PC-3 (cell line): ENCODE measurements at regions of chr3 and their contacts with region 1.

Region 1: DNA sequence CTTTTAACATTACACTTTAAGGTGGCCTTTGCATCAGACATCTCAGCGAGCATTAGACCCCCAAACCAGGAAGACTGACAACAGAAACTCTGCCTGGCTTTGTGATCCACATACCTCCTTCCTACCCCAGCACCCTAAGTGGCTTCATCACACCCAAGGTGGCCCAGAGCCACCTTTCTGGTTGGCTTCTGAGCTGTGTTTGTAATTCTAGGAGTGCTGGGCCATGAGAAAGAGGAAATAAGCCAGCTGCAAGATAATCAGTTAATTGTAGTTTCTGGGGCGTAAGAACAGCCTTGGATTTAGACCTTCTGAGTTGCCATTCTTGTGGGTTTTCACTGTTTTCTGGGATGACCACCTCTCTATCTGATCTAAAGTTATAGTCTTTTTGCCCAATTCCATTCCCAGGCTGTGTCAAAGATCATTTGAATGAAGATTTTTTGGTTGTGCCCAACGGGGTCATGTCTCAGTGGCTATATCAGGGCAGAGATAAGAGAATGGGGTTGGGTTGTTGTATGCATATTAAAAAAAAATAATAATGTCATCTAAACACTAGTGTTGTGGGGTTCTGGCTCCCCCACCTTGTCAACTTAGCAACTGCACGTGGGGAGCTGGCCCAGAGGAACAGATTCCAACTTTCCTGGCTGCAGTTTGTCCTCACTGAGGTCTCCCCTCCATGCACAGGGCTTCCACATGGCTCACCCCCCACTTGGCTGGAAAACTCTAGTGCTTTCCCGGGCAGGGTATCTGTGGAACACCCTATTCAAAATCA is 234.8 kb upstream of the WNT5A start:
- DNase-seq: peak; percentile 56
- ATAC-seq: peak; percentile 64
- H3K4me3 ChIP-seq: no peak overlapping the region
- H3K27ac ChIP-seq: no peak overlapping the region
- H3K4me1 ChIP-seq: no peaks in the 10 kb centered on the region
- H3K27me3 ChIP-seq: no peaks in the 10 kb centered on the region
- CTCF ChIP-seq: peak; percentile 64

Region 2: DNA sequence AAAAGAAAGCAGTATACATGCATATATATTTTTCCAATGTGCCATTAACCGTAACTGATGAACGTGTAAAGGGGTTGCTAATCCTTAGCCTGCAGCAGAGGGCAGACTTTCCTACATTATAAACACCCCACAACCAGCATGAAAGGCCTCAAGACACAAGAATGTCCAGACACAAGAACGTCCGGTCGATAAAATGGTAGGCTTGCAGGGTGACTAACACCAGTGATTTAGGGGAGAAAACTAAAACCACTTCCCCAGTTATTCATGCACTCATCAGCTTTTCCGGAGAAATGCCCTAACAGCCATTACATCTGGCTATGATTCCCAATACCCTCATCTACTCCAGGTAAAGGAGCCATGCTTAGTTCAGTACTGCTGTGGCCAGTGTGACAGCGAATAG is 851.5 kb before region 1 on chr3:
- CTCF ChIA-PET with region 1: no interaction called
- POLR2A ChIA-PET with region 1: no interaction called
- intact Hi-C with region 1: loop called (anchors 1 kb)
- DNase-seq: peak; percentile 85
- ATAC-seq: peak; percentile 94
- H3K4me3 ChIP-seq: no peak overlapping the region
- H3K27ac ChIP-seq: peak overlapping the region; percentile 38; the same call in 1 of the 2 replicates
- H3K4me1 ChIP-seq: peaks cover 21% of the 10 kb centered on the region
- H3K27me3 ChIP-seq: no peaks in the 10 kb centered on the region
- CTCF ChIP-seq: peak; percentile 85

Region 3: GRCh38 chr3:55434789-55435188 is 287.1 kb before region 1 on chr3:
- CTCF ChIA-PET with region 1: no interaction called
- POLR2A ChIA-PET with region 1: no interaction called
- intact Hi-C with region 1: loop called (anchors 1 kb)
- DNase-seq: peak; percentile 73
- ATAC-seq: peak; percentile 74
- H3K4me3 ChIP-seq: no peak overlapping the region
- H3K27ac ChIP-seq: no peak overlapping the region
- H3K4me1 ChIP-seq: no peaks in the 10 kb centered on the region
- H3K27me3 ChIP-seq: no peaks in the 10 kb centered on the region
- CTCF ChIP-seq: peak; percentile 83

Region 4: DNA sequence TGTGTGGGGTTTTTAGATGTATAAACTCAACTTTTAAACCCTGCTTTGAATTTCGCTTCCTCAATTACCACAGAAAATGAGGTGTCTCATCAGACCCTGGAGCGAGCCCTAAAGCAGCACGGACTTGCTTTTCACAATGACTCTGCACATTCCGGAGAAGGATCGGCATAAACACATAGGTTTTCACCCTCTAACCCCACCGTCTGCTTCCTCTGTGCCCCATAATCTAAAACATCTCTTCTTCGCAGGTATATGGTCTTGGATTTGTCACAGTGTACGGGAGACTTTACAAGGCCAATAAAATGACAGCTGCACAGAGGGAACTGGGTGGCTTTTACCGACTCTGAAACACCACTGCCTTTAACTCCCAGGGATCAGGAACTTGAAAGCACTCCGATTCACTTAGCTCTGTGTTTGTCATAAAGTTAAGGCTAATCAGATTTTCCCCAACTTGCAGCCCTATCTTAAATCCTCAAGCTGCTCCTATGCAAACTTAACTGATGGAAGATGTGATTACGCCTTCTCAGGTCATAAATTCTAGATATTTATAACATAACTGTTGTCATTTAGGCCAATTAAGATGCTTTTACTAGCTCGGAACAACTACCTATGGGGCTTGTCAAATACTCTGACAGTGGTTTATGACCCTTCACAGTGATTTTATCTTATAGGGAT is 101.4 kb before region 1 on chr3:
- CTCF ChIA-PET with region 1: no interaction called
- POLR2A ChIA-PET with region 1: no interaction called
- intact Hi-C with region 1: loop called (anchors 5 kb)
- DNase-seq: peak; percentile 55
- ATAC-seq: peak; percentile 42
- H3K4me3 ChIP-seq: peak overlapping the region; percentile 17; the same call in 1 of the 2 replicates
- H3K27ac ChIP-seq: peak overlapping the region; percentile 44
- H3K4me1 ChIP-seq: peaks cover 48% of the 10 kb centered on the region
- H3K27me3 ChIP-seq: no peaks in the 10 kb centered on the region
- CTCF ChIP-seq: no peak